Natural killer cell (primary cell): ENCODE measurements at regions of chr12 and their contacts with region 1.

Region 1: GRCh38 chr12:7806863-7807487 is 17.8 kb downstream of the NANOG start:
- DNase-seq: peak; percentile 45 to 75
- ATAC-seq: peak; percentile 68 to 84 (median 82)
- H3K4me3 ChIP-seq: no peak overlapping the region
- H3K4me3 Mint-ChIP-seq: no peak overlapping the region
- H3K27ac ChIP-seq: no peak overlapping the region
- H3K27ac Mint-ChIP-seq: no peak overlapping the region
- H3K4me1 ChIP-seq: no peaks in the 10 kb centered on the region
- H3K4me1 Mint-ChIP-seq: no peaks in the 10 kb centered on the region
- H3K27me3 ChIP-seq: no peaks in the 10 kb centered on the region
- H3K27me3 Mint-ChIP-seq: peaks cover 0 to 3% of the 10 kb centered on the region in 2 donors
- CTCF ChIP-seq: peak; percentile 92

Region 2: DNA sequence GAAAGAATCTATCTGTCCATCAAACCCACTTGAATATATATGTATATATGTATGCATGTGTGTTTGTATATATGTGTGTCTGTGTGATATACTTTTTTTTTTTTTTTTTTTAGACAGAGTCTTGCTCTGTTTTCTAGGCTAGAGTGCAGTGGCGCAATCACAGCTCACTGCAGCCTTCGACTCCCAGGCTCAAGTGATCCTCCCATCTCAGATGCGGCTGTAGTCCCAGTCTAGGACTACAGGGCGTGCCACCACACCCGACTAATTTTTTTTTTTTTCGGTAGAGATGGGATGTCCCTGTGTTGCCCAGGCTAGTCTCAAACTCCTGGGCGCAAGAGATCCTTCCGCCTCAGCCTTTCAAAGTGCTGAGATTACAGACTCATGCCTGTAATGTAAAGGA is 128.2 kb before region 1 on chr12:
- intact Hi-C with region 1: loop called (anchors 1 kb)
- DNase-seq: no peak
- ATAC-seq: no peak
- H3K4me3 ChIP-seq: no peak overlapping the region
- H3K4me3 Mint-ChIP-seq: no peak overlapping the region
- H3K27ac ChIP-seq: no peak overlapping the region
- H3K27ac Mint-ChIP-seq: no peak overlapping the region
- H3K4me1 ChIP-seq: no peaks in the 10 kb centered on the region
- H3K4me1 Mint-ChIP-seq: peaks cover 0 to 7% of the 10 kb centered on the region in 2 donors
- H3K27me3 ChIP-seq: no peaks in the 10 kb centered on the region
- H3K27me3 Mint-ChIP-seq: peaks cover 5 to 13% of the 10 kb centered on the region in 2 donors
- CTCF ChIP-seq: no peak

Region 3: GRCh38 chr12:7693793-7694192 is 113.2 kb before region 1 on chr12:
- intact Hi-C with region 1: no loop called
- DNase-seq: no peak
- ATAC-seq: no peak
- H3K4me3 ChIP-seq: no peak overlapping the region
- H3K4me3 Mint-ChIP-seq: no peak overlapping the region
- H3K27ac ChIP-seq: no peak overlapping the region
- H3K27ac Mint-ChIP-seq: no peak overlapping the region
- H3K4me1 ChIP-seq: peaks cover 3% of the 10 kb centered on the region
- H3K4me1 Mint-ChIP-seq: peaks cover 5 to 10% of the 10 kb centered on the region in 2 donors
- H3K27me3 ChIP-seq: peaks cover 3% of the 10 kb centered on the region
- H3K27me3 Mint-ChIP-seq: peaks cover 16 to 21% of the 10 kb centered on the region in 2 donors
- CTCF ChIP-seq: no peak

Region 4: DNA sequence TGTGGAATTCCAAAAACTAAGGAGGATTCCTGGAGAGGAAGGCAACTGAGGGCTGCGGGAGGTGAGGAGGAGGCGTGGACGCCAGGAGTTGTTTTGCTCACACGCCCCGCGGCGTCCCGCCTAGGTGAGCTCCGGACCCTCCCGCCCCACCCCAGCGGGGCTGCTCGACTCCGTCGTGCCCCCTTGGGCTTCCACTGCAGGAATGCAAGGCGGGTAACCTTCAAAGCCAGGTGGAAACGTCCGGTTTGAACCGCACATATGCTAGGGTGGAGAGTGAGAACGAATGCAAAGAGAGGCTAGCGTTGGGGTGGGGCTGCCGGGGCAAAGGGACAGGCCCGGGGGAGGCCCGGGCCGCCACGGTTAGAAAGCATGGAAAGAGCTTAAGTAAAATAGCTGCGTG is 101.1 kb before region 1 on chr12:
- intact Hi-C with region 1: no loop called
- DNase-seq: no peak
- ATAC-seq: no peak
- H3K4me3 ChIP-seq: no peak overlapping the region
- H3K4me3 Mint-ChIP-seq: no peak overlapping the region
- H3K27ac ChIP-seq: no peak overlapping the region
- H3K27ac Mint-ChIP-seq: no peak overlapping the region
- H3K4me1 ChIP-seq: no peaks in the 10 kb centered on the region
- H3K4me1 Mint-ChIP-seq: no peaks in the 10 kb centered on the region
- H3K27me3 ChIP-seq: no peaks in the 10 kb centered on the region
- H3K27me3 Mint-ChIP-seq: no peaks in the 10 kb centered on the region
- CTCF ChIP-seq: no peak

Region 5: DNA sequence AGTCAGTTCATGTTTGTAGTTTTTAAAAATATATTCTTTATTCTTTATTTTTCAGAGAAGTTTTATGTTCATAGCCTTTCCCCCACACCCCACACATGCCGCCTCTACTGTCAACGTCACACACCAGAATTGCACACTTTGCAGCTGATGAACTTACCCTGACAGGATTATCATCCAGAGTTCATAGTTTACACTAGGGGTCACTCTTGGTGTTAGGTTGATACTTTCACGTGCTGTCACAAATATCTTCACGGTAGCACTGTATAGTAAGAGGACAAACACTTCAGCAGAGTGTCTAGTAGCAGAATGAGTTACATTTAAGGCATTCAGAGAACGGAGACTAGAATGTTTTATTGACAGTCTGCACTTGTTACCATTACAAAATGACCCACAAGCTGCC is 90.6 kb before region 1 on chr12:
- intact Hi-C with region 1: loop called (anchors 1 kb)
- DNase-seq: peak in 1 of 2 donors; percentile 17
- ATAC-seq: peak in 2 of 3 donors; percentile 34 to 59
- H3K4me3 ChIP-seq: no peak overlapping the region
- H3K4me3 Mint-ChIP-seq: no peak overlapping the region
- H3K27ac ChIP-seq: no peak overlapping the region
- H3K27ac Mint-ChIP-seq: no peak overlapping the region
- H3K4me1 ChIP-seq: no peaks in the 10 kb centered on the region
- H3K4me1 Mint-ChIP-seq: no peaks in the 10 kb centered on the region
- H3K27me3 ChIP-seq: no peaks in the 10 kb centered on the region
- H3K27me3 Mint-ChIP-seq: peaks cover 0 to 25% of the 10 kb centered on the region in 2 donors
- CTCF ChIP-seq: peak; percentile 20